ENCODE measurements at regions of chr5 and their contacts with region 1.

Region 1: GRCh38 chr5:151115274-151115905 is 34.6 kb upstream of the TNIP1 start:
- DNase-seq: no peak
- H3K4me3 ChIP-seq: no peak overlapping the region
- H3K27me3 ChIP-seq: no peaks in the 10 kb centered on the region
- CTCF ChIP-seq: peak; percentile 98

Region 2: GRCh38 chr5:151002250-151002649 is 113.1 kb before region 1 on chr5:
- CTCF ChIA-PET with region 1: interaction called, 30 read pairs
- POLR2A ChIA-PET with region 1: no interaction called
- DNase-seq: no peak
- H3K4me3 ChIP-seq: no peak overlapping the region
- H3K27me3 ChIP-seq: peaks cover 2% of the 10 kb centered on the region
- CTCF ChIP-seq: peak; percentile 41

Region 3: DNA sequence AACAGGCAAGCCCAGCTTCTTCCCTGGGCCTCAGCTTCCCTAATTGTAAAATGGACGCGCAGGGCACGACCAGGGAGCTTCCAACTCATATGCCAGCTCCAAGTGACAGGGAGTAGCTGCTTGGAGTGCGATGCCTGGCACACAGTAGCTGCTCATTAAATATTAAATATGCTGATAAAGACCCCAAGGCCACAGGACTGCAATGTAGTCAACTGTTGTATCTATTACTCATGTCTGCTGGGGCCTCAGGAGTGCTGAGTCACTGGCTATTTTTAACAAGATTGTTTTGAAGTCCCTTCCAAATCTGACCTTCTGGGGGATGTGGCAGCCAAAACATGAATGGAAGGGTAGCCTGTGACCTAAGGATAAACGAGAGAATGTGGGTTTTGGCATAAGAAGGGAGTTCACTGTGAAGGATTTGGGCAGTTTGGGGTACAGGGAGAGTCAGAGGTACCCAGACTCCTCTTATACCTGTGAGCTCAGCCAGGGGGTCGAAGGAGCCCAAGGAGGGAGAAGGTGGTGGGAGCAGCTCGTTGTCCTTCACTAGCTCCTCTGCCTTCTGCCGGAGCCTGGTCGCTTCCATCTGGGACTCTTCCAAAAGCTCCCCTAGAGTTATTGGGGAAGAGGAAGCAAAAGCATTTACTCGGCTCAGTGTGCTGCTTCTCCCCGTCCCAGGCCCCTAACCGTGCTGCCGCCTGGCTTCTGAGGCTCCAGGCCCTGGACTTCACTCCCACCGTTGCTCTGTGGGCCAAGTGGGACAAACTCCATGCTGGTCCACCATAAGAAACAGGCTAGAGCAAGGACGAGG is 52.0 kb before region 1 on chr5:
- CTCF ChIA-PET with region 1: interaction called, 33 read pairs
- POLR2A ChIA-PET with region 1: no interaction called
- DNase-seq: peak; percentile 58
- H3K4me3 ChIP-seq: no peak overlapping the region
- H3K27me3 ChIP-seq: no peaks in the 10 kb centered on the region
- CTCF ChIP-seq: no peak

Region 4: DNA sequence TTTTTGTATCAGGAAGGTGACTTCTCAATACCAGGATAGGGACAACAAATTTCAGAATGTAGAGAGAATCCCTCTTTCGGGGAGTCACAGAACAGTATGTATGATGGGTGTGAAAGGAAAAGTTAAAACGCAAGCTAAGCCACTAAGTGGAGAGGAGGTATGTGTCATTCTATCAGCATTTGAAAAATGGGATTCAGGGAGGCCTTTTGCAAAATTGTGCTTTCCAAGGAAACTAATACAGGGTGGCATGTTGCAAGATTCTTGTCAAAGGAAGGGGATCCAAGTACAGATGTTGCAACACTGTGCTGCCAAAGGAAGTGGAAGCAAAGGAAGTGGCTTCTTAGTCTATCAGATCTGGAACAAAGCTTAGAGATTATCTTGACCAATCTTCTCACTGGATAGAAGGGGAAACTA is 21.9 kb before region 1 on chr5:
- CTCF ChIA-PET with region 1: interaction called, 18 read pairs
- POLR2A ChIA-PET with region 1: no interaction called
- DNase-seq: peak; percentile 93
- H3K4me3 ChIP-seq: no peak overlapping the region
- H3K27me3 ChIP-seq: no peaks in the 10 kb centered on the region
- CTCF ChIP-seq: peak; percentile 48

Region 5: DNA sequence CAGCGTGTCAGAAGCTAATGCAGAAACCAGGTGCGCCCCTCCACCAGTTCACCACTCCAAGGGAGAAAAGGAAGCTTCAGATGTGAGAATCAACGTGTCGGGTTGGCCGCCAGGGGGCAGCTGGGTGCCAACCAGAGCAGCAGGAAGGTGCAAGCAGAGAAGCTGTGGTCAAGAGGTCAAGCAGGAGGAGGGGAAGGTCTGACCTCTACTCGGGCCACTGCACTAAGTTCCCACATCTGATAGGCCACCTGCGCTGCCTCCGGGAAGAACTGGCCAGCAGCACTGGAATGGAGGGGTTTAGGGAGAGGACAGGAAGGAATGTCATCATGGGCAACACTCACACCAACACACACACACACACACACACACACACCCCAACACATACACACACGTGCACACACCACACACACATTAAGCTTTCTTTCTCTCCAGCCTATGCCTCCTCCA is 10.8 kb after region 1 on chr5:
- CTCF ChIA-PET with region 1: interaction called, 84 read pairs
- POLR2A ChIA-PET with region 1: no interaction called
- DNase-seq: no peak
- H3K4me3 ChIP-seq: no peak overlapping the region
- H3K27me3 ChIP-seq: no peaks in the 10 kb centered on the region
- CTCF ChIP-seq: peak; percentile 85

Region 6: DNA sequence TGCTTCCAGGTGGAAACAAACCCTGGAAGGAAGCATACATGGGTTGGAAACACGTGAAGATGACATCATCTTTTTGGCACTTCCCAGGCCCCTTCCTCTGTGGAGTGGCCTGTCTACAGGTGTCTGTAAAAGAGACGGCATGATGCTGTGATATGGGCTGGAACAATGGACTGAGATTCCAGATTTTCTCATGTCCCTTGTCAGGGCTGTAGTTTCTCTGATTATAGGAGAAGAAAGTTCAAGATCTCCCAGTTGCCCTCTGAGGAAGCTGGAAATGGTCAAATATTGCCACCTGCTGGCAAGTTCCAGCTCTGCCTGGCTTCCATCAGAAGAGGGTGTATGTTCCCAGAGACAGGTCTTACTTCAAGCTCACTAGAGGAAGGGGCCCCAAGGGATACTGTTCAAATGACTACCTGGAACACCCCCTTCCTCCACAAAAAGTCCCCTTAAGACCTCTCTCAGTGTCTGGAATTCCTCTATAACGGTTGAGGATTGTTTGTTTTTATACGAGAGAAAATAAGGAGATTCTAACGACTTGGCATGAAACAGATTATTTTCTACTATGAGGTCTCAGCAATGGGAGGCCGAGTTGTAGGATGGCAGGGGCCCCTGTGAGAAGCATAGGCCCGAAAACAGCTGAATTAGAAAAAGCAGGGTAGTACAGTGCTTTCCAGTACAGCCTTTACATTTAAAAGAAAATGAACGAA is 49.4 kb after region 1 on chr5:
- CTCF ChIA-PET with region 1: interaction called, 89 read pairs
- POLR2A ChIA-PET with region 1: no interaction called
- DNase-seq: no peak
- H3K4me3 ChIP-seq: no peak overlapping the region
- H3K27me3 ChIP-seq: peaks cover 1% of the 10 kb centered on the region; the same call in 1 of the 2 replicates
- CTCF ChIP-seq: peak; percentile 92

Region 7: DNA sequence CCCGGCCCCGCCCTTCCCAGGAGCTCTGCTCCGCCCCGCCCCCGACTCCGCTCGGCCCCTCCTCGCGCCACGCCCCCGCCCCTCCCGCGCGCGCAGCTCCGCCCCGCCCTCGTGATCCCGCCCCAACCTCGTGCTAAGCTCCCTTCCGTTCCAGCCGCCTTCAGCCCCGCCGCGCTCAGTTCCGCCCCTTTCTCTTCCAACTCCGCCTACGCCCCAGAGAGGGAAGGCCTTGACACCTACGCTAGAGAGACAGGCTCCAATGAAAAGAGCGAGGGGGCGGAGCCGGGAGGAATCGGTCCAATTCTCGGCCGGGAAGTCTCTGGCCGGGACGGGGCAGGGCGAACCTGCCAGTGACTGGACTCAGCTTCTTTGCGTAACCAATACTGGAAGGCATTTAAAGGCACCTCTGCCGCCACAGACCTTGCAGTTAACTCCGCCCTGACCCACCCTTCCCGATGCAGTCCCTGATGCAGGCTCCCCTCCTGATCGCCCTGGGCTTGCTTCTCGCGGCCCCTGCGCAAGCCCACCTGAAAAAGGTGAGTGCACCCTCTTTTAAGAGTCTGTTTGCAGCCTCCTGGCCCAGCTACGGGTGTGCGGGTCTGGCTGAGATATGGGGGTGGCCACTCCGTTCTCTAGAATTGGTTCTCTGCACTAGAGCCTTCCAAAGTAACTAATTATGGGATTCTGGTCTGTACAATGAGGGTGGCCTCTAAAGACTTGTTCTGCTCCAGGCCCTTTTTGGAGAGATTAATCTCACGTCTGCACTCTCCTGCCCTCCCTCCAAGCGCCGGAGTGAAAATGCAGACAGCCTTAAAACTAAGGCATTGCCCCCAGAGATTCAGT is 137.6 kb after region 1 on chr5 and contains the start of gene GM2A:
- CTCF ChIA-PET with region 1: no interaction called
- POLR2A ChIA-PET with region 1: no interaction called
- DNase-seq: peak; percentile 97
- H3K4me3 ChIP-seq: peak within 1 kb of the TSS; percentile 77
- H3K27me3 ChIP-seq: no peaks in the 10 kb centered on the region
- CTCF ChIP-seq: no peak
- polyA plus RNA-seq, gene GM2A: 11.5 and 12.7 TPM in 2 replicates

Region 8: DNA sequence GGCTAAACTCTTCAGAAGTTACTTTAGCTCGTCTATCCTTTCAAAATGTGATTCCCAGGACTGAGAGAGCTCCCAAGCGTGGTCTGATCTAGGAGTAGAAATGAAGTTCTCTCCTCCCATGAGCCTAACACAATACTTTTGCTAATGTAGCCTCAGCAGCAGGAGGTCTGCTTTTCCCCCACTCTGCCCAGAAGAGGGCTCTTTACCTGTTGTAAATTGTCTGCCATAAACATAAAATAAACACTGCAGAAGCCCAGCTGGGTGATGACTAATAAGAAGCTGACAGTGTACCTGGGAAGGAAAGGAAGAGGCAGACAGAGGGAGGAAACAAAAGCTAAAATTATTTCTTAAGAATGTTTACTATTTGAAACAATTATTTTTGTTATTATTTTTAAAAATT is 172.8 kb after region 1 on chr5:
- CTCF ChIA-PET with region 1: no interaction called
- POLR2A ChIA-PET with region 1: no interaction called
- DNase-seq: no peak
- H3K4me3 ChIP-seq: no peak overlapping the region
- H3K27me3 ChIP-seq: no peaks in the 10 kb centered on the region; the same call in 1 of the 2 replicates
- CTCF ChIP-seq: no peak